CD14-positive monocyte (primary cell): ENCODE measurements at regions of chr2 and their contacts with region 1.

Region 1: DNA sequence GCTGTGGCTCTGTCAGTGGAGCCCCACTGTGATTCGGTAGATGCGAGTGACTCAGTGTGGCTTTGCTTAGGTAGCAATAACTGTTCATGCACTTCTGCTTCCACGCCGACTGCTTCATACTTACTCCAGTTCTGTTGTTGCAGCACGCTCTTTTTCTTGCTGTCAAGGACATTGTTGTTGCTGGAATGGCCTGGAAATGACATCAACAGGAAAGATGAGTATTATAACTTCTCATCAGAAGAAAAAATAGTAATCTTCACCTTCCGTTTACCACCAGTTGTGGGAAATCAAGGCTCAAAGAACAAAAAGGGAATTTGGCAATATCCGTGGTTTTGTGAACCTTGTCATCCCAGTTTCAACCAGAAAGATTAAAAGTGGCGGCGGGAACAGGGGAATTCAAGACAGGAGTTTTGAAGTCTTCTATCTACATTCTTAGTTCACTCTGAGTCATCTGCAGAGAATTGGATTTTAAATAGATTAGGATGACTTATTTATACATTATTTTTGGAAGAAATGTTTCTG is 8.3 kb downstream of the TM4SF20 start:
- DNase-seq: peak; percentile 96 to 99 (median 97)
- H3K4me3 ChIP-seq: peak overlapping the region in 1 of 3 experiments; percentile 43
- H3K4me3 Mint-ChIP-seq: peak overlapping the region in 1 of 2 donors; percentile 60
- H3K27ac ChIP-seq: peak overlapping the region; percentile 91 to 93
- H3K27ac Mint-ChIP-seq: peak overlapping the region; percentile 96 to 100 (median 99)
- H3K4me1 ChIP-seq: peaks cover 58 to 74% of the 10 kb centered on the region in 2 donors
- H3K4me1 Mint-ChIP-seq: peaks cover 65% of the 10 kb centered on the region
- H3K27me3 ChIP-seq: no peaks in the 10 kb centered on the region
- H3K27me3 Mint-ChIP-seq: no peaks in the 10 kb centered on the region
- CTCF ChIP-seq: no peak

Region 2: DNA sequence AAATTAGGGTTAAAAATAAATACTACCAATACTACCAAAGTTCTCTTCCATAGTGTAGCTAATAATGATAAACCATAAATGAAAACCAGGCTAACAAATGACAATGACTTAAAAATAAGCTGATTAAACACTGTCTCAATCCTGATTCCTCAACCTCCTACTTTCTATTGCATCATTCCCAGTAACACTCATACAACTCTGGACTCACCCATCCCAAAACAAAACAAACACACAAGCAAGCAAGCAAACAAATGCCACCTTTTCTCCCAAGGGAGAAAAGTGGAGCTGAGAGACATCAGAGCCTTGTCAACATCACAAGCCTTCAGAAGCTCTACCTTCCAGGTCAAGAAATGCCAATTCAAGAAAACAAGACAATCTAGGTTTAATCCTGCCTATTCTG is 1350.7 kb before region 1 on chr2:
- intact Hi-C with region 1: no loop called
- DNase-seq: no peak
- H3K4me3 ChIP-seq: no peak overlapping the region
- H3K4me3 Mint-ChIP-seq: no peak overlapping the region
- H3K27ac ChIP-seq: no peak overlapping the region
- H3K27ac Mint-ChIP-seq: no peak overlapping the region
- H3K4me1 ChIP-seq: no peaks in the 10 kb centered on the region
- H3K4me1 Mint-ChIP-seq: peaks cover 3% of the 10 kb centered on the region
- H3K27me3 ChIP-seq: no peaks in the 10 kb centered on the region
- H3K27me3 Mint-ChIP-seq: peaks cover 1 to 2% (median 1%) of the 10 kb centered on the region in 3 donors
- CTCF ChIP-seq: no peak

Region 3: GRCh38 chr2:227324995-227325838 is 45.6 kb before region 1 on chr2 and contains the start of gene MFF:
- intact Hi-C with region 1: loop called in 1 of 2 experiments (anchors 5 kb)
- DNase-seq: peak; percentile 92 to 93 (median 92)
- H3K4me3 ChIP-seq: peak within 1 kb of the TSS; percentile 76 to 88 (median 87)
- H3K4me3 Mint-ChIP-seq: peak within 1 kb of the TSS; percentile 91 to 95
- H3K27ac ChIP-seq: peak within 1 kb of the TSS; percentile 30 to 83
- H3K27ac Mint-ChIP-seq: peak within 1 kb of the TSS; percentile 78 to 93 (median 89)
- H3K4me1 ChIP-seq: peaks cover 17 to 28% of the 10 kb centered on the region in 2 donors
- H3K4me1 Mint-ChIP-seq: peaks cover 29% of the 10 kb centered on the region
- H3K27me3 ChIP-seq: no peaks in the 10 kb centered on the region
- H3K27me3 Mint-ChIP-seq: peaks cover 2 to 3% (median 3%) of the 10 kb centered on the region in 3 donors
- CTCF ChIP-seq: peak; percentile 11
- polyA plus RNA-seq, gene MFF: 39.4 to 100 (median 91.7) TPM

Region 4: DNA sequence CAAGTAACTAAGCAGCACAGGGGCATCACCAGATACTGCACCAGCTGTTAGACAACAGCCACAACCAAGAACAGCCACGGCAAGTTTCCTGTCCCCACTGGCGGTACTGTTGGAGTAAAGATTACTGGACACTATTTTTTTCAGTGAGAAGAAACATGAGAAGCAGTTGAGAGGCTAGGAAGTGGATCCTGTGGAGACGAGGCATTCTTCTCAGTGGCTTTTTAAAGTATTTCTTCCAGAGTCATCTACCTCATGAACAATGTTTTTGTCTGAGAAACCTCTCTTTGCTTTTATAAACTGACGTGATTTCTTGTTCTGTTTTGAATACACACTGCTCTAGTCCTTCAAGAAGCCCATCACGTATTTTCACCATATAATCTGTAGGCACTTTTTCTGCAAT is 10.5 kb before region 1 on chr2:
- intact Hi-C with region 1: no loop called
- DNase-seq: no peak
- H3K4me3 ChIP-seq: no peak overlapping the region
- H3K4me3 Mint-ChIP-seq: no peak overlapping the region
- H3K27ac ChIP-seq: no peak overlapping the region
- H3K27ac Mint-ChIP-seq: no peak overlapping the region
- H3K4me1 ChIP-seq: no peaks in the 10 kb centered on the region
- H3K4me1 Mint-ChIP-seq: no peaks in the 10 kb centered on the region
- H3K27me3 ChIP-seq: no peaks in the 10 kb centered on the region
- H3K27me3 Mint-ChIP-seq: peaks cover 0 to 2% (median 0%) of the 10 kb centered on the region in 3 donors
- CTCF ChIP-seq: no peak

Region 5: DNA sequence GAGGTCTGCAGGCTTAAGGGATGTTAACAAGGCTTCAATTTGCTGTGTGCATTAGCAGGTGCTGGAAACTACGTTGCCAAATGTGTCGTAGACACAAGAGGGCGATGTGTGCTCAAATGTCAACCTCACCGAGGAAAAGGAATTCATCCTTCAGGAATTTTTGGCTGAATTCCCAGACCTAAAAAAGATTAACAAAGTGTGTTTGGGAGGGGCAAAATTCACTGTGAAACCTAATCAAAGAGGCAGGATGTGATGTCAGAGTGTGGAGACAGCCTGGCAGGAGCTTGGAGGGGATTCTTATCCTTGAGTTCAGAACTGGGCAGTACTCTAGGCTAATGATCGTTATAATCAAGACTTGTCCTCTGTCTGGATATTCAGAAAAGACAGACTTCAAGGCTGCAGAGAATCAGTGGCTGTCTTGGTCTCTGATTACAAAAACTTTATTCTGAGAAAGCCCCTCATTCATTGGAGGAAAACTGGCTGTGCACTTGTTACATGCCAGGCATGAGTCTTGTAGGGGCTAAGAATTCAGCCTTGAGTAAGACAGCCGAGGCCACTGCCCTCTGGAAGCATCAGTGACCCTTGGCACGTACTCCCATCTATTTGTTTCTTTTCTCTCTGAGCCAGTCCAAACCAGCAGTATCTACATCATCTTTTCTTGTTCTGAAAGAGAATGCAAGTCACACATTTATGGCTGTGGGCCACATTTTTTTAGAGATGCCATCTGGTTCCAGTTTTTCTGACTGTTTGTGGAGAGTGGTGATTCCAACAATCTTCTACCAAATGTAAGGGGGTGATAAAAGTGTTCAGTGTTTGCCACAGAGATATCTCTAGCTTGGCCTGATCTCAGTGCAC is 35.6 kb after region 1 on chr2:
- intact Hi-C with region 1: loop called (anchors 5 kb)
- DNase-seq: peak in 2 of 3 donors; percentile 41 to 45
- H3K4me3 ChIP-seq: peak overlapping the region in 1 of 3 experiments; percentile 65
- H3K4me3 Mint-ChIP-seq: peak overlapping the region; percentile 45 to 53
- H3K27ac ChIP-seq: peak overlapping the region; percentile 50 to 85
- H3K27ac Mint-ChIP-seq: peak overlapping the region; percentile 90 to 98 (median 97)
- H3K4me1 ChIP-seq: peaks cover 62 to 65% of the 10 kb centered on the region in 2 donors
- H3K4me1 Mint-ChIP-seq: peaks cover 67% of the 10 kb centered on the region
- H3K27me3 ChIP-seq: no peaks in the 10 kb centered on the region
- H3K27me3 Mint-ChIP-seq: peaks cover 0 to 4% (median 0%) of the 10 kb centered on the region in 3 donors
- CTCF ChIP-seq: peak; percentile 61

Region 6: DNA sequence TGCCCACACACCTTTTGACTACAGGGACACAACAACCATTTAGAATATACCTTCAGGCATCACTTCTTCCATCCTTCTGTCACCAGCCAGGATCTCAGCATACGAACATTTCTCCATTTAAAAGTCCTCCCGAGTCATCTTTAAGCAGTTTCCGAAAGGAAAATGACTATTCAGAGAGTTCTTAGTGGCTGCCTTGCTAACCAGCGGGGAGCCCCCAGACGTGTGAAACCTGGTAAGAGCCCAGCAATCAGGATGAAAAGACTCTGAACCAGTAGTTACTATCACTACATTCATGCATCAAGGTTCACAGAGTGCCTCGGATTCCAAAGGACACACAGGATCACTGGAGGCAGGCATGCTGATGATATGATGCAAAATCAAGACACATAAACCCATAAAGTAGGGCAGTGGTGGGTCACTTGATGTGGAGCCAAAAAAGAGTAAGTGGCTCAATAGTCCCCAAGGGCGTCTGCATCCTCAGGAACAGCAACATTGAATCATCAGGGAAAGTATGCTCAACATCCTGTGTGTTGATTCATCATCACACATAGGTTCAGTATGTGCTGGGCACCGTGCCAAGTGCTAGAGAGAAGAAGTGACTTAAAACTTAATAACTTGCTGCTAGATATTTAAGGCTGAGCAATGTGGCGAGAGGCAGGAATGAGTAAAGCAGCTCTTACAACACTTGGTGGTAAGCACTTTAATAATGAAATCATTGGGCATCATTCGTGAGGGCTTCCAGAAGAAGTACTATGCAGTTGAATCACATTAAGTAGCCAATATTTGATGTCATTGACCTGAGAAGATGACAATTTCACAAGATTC is 447.2 kb after region 1 on chr2:
- intact Hi-C with region 1: loop called (anchors 2 to 5 kb)
- DNase-seq: peak; percentile 98 to 100 (median 100)
- H3K4me3 ChIP-seq: peak overlapping the region in 1 of 3 experiments; percentile 45
- H3K4me3 Mint-ChIP-seq: peak overlapping the region in 1 of 2 donors; percentile 80
- H3K27ac ChIP-seq: peak overlapping the region; percentile 86 to 95
- H3K27ac Mint-ChIP-seq: peak overlapping the region; percentile 96 to 99 (median 98)
- H3K4me1 ChIP-seq: peaks cover 39 to 43% of the 10 kb centered on the region in 2 donors
- H3K4me1 Mint-ChIP-seq: peaks cover 47% of the 10 kb centered on the region
- H3K27me3 ChIP-seq: no peaks in the 10 kb centered on the region
- H3K27me3 Mint-ChIP-seq: peaks cover 4 to 9% (median 7%) of the 10 kb centered on the region in 3 donors
- CTCF ChIP-seq: no peak